ENCODE measurements at regions of chr2 and their contacts with region 1.

Region 1: DNA sequence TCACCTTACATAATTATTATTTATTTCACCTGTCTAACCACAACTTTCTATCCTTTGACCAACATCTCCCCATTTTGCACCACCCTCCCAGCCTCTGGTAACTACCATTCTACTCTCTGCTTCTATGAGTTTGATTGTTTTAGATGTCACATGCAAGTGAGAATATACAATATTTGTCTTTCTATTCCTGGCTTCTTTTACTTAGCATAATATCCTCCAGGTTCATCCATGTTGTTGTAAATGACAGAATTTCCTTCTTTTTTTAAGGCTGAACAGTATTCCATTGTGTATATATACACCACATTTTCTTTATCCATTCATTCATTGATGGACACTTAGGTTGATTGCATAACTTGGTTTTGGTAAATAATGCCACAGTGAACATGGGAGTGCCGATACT is 24.0 kb downstream of the PPM1B start:
- DNase-seq: no peak
- H3K4me3 ChIP-seq: no peak overlapping the region
- H3K27ac ChIP-seq: no peak overlapping the region
- H3K4me1 ChIP-seq: no peaks in the 10 kb centered on the region
- H3K27me3 ChIP-seq: no peaks in the 10 kb centered on the region
- CTCF ChIP-seq: no peak

Region 2: DNA sequence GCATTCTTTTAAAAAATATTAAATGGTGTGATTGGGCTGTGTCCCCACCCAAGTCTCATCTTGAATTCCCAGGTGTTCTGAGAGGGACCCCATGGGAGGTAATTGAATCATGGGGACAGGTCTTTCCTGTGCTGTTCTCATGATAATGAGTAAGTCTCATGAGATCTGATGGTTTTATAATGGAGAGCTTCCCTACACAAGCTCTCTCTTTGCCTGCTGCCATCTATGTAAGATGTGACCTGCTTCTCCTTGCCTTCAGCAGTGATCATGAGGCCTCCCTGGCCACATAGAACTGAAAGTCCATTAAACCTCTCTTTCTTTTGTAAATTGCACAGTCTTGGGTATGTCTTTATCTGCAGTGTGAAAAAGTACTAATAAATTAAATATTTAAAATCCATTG is 13.7 kb before region 1 on chr2:
- CTCF ChIA-PET with region 1: no interaction called
- dilution Hi-C with region 1: no loop called
- in situ Hi-C with region 1: no loop called
- intact Hi-C with region 1: loop called (anchors 1 kb)
- DNase-seq: no peak
- H3K4me3 ChIP-seq: no peak overlapping the region
- H3K27ac ChIP-seq: no peak overlapping the region
- H3K4me1 ChIP-seq: no peaks in the 10 kb centered on the region
- H3K27me3 ChIP-seq: no peaks in the 10 kb centered on the region
- CTCF ChIP-seq: no peak